Heart left ventricle (tissue), 16 donors: ENCODE measurements at regions of chr1 and their contacts with region 1.

Region 1: GRCh38 chr1:87328272-87329050 is at the start of gene LMO4:
- DNase-seq: peak; percentile 96 to 98 (median 98)
- ATAC-seq: peak; percentile 90 to 95 (median 94)
- H3K4me3 ChIP-seq: peak within 1 kb of the TSS; percentile 71 to 88 (median 80)
- H3K27ac ChIP-seq: peak within 1 kb of the TSS; percentile 89 to 98 (median 94)
- H3K4me1 ChIP-seq: peaks cover 0 to 33% (median 16%) of the 10 kb centered on the region in 12 donors
- H3K27me3 ChIP-seq: no peaks in the 10 kb centered on the region
- CTCF ChIP-seq: no peak
- POLR2A ChIP-seq: peak; percentile 73 to 97
- total RNA-seq, gene LMO4: 23.3 to 60.7 (median 29.6) TPM

Region 2: DNA sequence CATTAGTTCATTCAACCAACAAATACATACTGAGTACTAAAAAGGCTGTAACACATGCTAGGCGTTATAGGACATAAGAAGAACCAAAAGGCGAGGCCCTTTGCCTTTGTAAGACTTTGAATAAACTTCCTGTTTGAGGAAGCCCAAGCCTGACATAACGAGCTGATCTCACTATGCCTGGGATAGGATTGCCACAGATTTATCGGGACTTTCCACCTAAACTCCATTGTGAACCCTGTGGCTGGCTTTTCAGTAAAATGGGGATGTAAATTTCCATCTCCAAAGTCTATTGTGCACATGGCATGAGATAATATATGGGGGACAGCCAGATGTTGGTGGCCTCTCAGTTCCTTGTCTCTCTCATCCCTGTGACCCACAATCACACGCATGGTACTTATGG is 42.1 kb after region 1 on chr1:
- intact Hi-C with region 1: no loop called
- DNase-seq: no peak
- ATAC-seq: no peak
- H3K4me3 ChIP-seq: no peak overlapping the region
- H3K27ac ChIP-seq: no peak overlapping the region
- H3K4me1 ChIP-seq: peaks cover 0 to 21% (median 5%) of the 10 kb centered on the region in 12 donors
- H3K27me3 ChIP-seq: no peaks in the 10 kb centered on the region
- CTCF ChIP-seq: no peak
- POLR2A ChIP-seq: no peak

Region 3: GRCh38 chr1:87464022-87464490 is 135.6 kb after region 1 on chr1:
- intact Hi-C with region 1: loop called in 1 of 10 experiments (anchors 5 kb)
- DNase-seq: no peak
- ATAC-seq: peak in 3 of 4 donors; percentile 71 to 90 (median 85)
- H3K4me3 ChIP-seq: no peak overlapping the region
- H3K27ac ChIP-seq: no peak overlapping the region
- H3K4me1 ChIP-seq: peaks cover 0 to 6% (median 0%) of the 10 kb centered on the region in 12 donors
- H3K27me3 ChIP-seq: no peaks in the 10 kb centered on the region
- CTCF ChIP-seq: no peak
- POLR2A ChIP-seq: no peak

Region 4: DNA sequence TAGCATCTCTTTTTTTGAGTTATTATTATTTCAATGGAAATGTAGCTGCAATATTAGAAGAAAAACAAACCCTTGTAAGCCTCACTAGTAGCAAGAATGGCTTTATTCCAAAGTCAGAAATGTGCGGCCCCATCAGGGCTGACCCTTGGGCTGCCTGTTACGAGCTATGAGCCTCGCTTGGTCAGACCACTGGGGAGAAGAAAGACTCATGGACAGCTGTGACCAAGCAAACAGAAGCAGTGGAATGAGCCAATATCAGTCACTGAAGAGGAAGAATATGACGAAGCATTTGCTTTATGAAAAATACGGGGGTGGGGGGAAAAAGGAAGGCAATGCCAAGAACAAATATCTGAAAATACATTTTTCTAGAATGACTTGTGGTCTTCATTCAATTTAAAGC is 504.7 kb after region 1 on chr1:
- intact Hi-C with region 1: loop called in 2 of 10 experiments (anchors 10 kb)
- DNase-seq: peak; percentile 38 to 57 (median 48)
- ATAC-seq: peak; percentile 58 to 91 (median 76)
- H3K4me3 ChIP-seq: no peak overlapping the region
- H3K27ac ChIP-seq: peak overlapping the region in 3 of 12 donors; percentile 21 to 43 (median 29)
- H3K4me1 ChIP-seq: peaks cover 0 to 7% (median 0%) of the 10 kb centered on the region in 12 donors
- H3K27me3 ChIP-seq: no peaks in the 10 kb centered on the region
- CTCF ChIP-seq: no peak
- POLR2A ChIP-seq: no peak

Region 5: GRCh38 chr1:88052167-88052566 is 723.7 kb after region 1 on chr1:
- intact Hi-C with region 1: loop called in 1 of 10 experiments (anchors 10 kb)
- DNase-seq: no peak
- ATAC-seq: no peak
- H3K4me3 ChIP-seq: no peak overlapping the region
- H3K27ac ChIP-seq: no peak overlapping the region
- H3K4me1 ChIP-seq: no peaks in the 10 kb centered on the region
- H3K27me3 ChIP-seq: no peaks in the 10 kb centered on the region
- CTCF ChIP-seq: no peak
- POLR2A ChIP-seq: no peak